Mammary epithelial cell (primary cell): ENCODE measurements at regions of chr22 and their contacts with region 1.

Region 1: GRCh38 chr22:40603088-40603605 is 33.4 kb downstream of the MRTFA start:
- DNase-seq: peak; percentile 66
- H3K4me3 ChIP-seq: peak overlapping the region in 2 of 3 experiments; percentile 21 to 37
- H3K27ac ChIP-seq: peak overlapping the region; percentile 92
- H3K4me1 ChIP-seq: peaks cover 52% of the 10 kb centered on the region
- H3K27me3 ChIP-seq: no peaks in the 10 kb centered on the region
- CTCF ChIP-seq: no peak

Region 2: GRCh38 chr22:40183029-40183581 is 420.0 kb before region 1 on chr22:
- CTCF ChIA-PET with region 1: no interaction called
- dilution Hi-C with region 1: no loop called
- in situ Hi-C with region 1: no loop called
- intact Hi-C with region 1: no loop called
- DNase-seq: peak; percentile 50
- H3K4me3 ChIP-seq: peak overlapping the region in 1 of 3 experiments; percentile 15
- H3K27ac ChIP-seq: peak overlapping the region; percentile 34
- H3K4me1 ChIP-seq: peaks cover 27% of the 10 kb centered on the region
- H3K27me3 ChIP-seq: no peaks in the 10 kb centered on the region
- CTCF ChIP-seq: no peak

Region 3: GRCh38 chr22:40519284-40519947 is 83.7 kb before region 1 on chr22:
- CTCF ChIA-PET with region 1: no interaction called
- dilution Hi-C with region 1: loop called (anchors 5 kb)
- in situ Hi-C with region 1: no loop called
- intact Hi-C with region 1: loop called (anchors 2 kb)
- DNase-seq: peak; percentile 36
- H3K4me3 ChIP-seq: peak overlapping the region in 1 of 3 experiments; percentile 31
- H3K27ac ChIP-seq: peak overlapping the region; percentile 82
- H3K4me1 ChIP-seq: peaks cover 6% of the 10 kb centered on the region
- H3K27me3 ChIP-seq: no peaks in the 10 kb centered on the region
- CTCF ChIP-seq: no peak

Region 4: GRCh38 chr22:40552070-40552469 is 51.1 kb before region 1 on chr22:
- CTCF ChIA-PET with region 1: no interaction called
- dilution Hi-C with region 1: no loop called
- in situ Hi-C with region 1: no loop called
- intact Hi-C with region 1: no loop called
- DNase-seq: no peak
- H3K4me3 ChIP-seq: no peak overlapping the region
- H3K27ac ChIP-seq: no peak overlapping the region
- H3K4me1 ChIP-seq: no peaks in the 10 kb centered on the region
- H3K27me3 ChIP-seq: no peaks in the 10 kb centered on the region
- CTCF ChIP-seq: no peak

Region 5: GRCh38 chr22:40567106-40567505 is 36.0 kb before region 1 on chr22:
- CTCF ChIA-PET with region 1: no interaction called
- dilution Hi-C with region 1: loop called (anchors 5 kb)
- in situ Hi-C with region 1: no loop called
- intact Hi-C with region 1: no loop called
- DNase-seq: peak; percentile 57
- H3K4me3 ChIP-seq: peak overlapping the region in 1 of 3 experiments; percentile 27
- H3K27ac ChIP-seq: peak overlapping the region; percentile 64
- H3K4me1 ChIP-seq: peaks cover 22% of the 10 kb centered on the region
- H3K27me3 ChIP-seq: no peaks in the 10 kb centered on the region
- CTCF ChIP-seq: no peak

Region 6: GRCh38 chr22:40620464-40621046 is 17.4 kb after region 1 on chr22:
- CTCF ChIA-PET with region 1: no interaction called
- dilution Hi-C with region 1: no loop called
- in situ Hi-C with region 1: no loop called
- intact Hi-C with region 1: loop called (anchors 2 kb)
- DNase-seq: peak; percentile 80
- H3K4me3 ChIP-seq: no peak overlapping the region
- H3K27ac ChIP-seq: no peak overlapping the region
- H3K4me1 ChIP-seq: no peaks in the 10 kb centered on the region
- H3K27me3 ChIP-seq: no peaks in the 10 kb centered on the region
- CTCF ChIP-seq: no peak

Region 7: GRCh38 chr22:40714192-40714951 is 111.2 kb after region 1 on chr22:
- CTCF ChIA-PET with region 1: no interaction called
- dilution Hi-C with region 1: no loop called
- in situ Hi-C with region 1: no loop called
- intact Hi-C with region 1: no loop called
- DNase-seq: peak; percentile 36
- H3K4me3 ChIP-seq: no peak overlapping the region
- H3K27ac ChIP-seq: no peak overlapping the region
- H3K4me1 ChIP-seq: no peaks in the 10 kb centered on the region
- H3K27me3 ChIP-seq: no peaks in the 10 kb centered on the region
- CTCF ChIP-seq: no peak